K562 (cell line): ENCODE measurements at regions of chr17 and their contacts with region 1.

Region 1: GRCh38 chr17:46940621-46941404 is 17.9 kb downstream of the GOSR2 start:
- DNase-seq: peak; percentile 82 to 90 (median 83)
- ATAC-seq: peak; percentile 87
- H3K4me3 ChIP-seq: no peak overlapping the region
- H3K27ac ChIP-seq: no peak overlapping the region
- H3K4me1 ChIP-seq: peaks cover 19% of the 10 kb centered on the region in 2 experiments
- H3K27me3 ChIP-seq: no peaks in the 10 kb centered on the region
- CTCF ChIP-seq: peak; percentile 89 to 95 (median 95)
- EP300 ChIP-seq: no peak
- POLR2A ChIP-seq: peak; percentile 48; the same call in 1 of the 2 replicates
- RAD21 ChIP-seq: peak; percentile 82 to 95

Region 2: DNA sequence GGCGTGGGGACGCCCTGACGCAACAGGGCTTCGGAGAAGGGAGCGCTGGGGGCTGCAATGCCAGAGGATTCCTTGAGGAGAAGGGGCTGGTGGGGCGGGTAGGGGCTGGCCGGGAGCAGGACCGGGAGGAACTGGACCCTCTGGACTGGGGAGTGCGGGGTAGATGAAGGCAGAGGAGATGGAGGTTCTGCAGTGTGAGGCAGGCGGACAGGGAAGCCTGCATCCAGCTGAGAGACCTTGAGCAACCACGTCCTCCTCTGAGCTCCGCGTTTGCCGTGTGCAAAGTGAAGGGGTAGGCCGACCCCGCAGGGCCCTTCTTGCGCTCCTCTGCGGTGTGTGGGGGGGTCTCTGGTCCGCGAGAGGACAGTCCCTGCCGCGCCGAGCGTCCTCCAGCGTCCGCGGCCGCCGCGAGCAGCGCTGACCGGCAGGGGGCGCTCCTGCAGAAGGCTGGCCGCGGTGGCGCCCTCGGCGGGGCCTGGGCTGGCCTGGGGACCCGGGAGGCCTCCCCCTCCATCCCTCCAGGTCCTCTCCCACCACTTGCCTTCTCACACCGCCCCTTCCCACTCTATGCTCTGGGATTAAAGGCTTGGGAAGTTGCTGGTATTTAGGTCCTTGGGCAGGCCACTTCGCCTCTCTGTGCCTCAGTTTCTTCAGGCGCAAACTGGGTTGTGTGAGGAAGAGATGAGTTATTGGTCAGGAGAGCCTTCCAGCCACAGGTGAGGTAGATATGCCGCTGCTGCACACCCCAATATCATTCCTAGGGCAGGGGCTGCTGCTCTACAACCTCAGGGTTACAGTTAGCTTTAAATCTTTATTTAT is 99.0 kb before region 1 on chr17:
- CTCF ChIA-PET with region 1: interaction called, 4 read pairs
- POLR2A ChIA-PET with region 1: interaction called, 4 read pairs
- in situ Hi-C with region 1: no loop called
- intact Hi-C with region 1: loop called (anchors 1 kb)
- DNase-seq: peak; percentile 52 to 82 (median 81)
- ATAC-seq: peak; percentile 97
- H3K4me3 ChIP-seq: peak overlapping the region; percentile 9; the same call in 1 of the 2 replicates
- H3K27ac ChIP-seq: no peak overlapping the region
- H3K4me1 ChIP-seq: peaks cover 0 to 9% of the 10 kb centered on the region in 2 experiments; a peak in 4 of 5 replicates
- H3K27me3 ChIP-seq: peaks cover 0 to 7% of the 10 kb centered on the region in 2 experiments; a peak in 3 of 5 replicates
- CTCF ChIP-seq: peak; percentile 79 to 92 (median 90)
- EP300 ChIP-seq: no peak
- POLR2A ChIP-seq: no peak
- RAD21 ChIP-seq: peak; percentile 56 to 88

Region 3: DNA sequence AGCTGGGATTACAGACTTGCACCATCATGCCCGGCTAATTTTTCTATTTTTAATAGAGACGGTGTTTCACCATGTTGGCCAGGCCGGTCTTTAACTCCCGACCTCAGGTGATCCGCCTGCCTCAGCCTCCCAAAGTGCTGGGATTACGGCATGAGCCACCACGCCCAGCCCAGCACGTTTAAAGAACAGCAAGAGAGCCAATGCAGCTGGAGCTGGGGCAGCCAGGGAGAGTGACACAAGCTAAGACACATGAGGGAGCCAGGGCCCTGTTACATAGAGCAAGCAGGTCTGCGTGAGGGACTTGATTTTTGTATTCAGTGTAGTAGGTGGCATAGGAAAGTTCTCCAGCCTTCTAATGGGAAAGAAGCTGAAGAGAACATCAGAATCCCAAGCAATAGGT is 39.5 kb before region 1 on chr17:
- CTCF ChIA-PET with region 1: no interaction called
- POLR2A ChIA-PET with region 1: interaction called, 4 read pairs
- in situ Hi-C with region 1: no loop called
- intact Hi-C with region 1: loop called (anchors 5 kb)
- DNase-seq: no peak
- ATAC-seq: no peak; the same call in 2 of the 3 replicates
- H3K4me3 ChIP-seq: no peak overlapping the region
- H3K27ac ChIP-seq: no peak overlapping the region
- H3K4me1 ChIP-seq: peaks cover 9 to 10% of the 10 kb centered on the region in 2 experiments; a peak in 4 of 5 replicates
- H3K27me3 ChIP-seq: peaks cover 8 to 23% of the 10 kb centered on the region in 2 experiments; a peak in 3 of 5 replicates
- CTCF ChIP-seq: no peak
- EP300 ChIP-seq: no peak
- POLR2A ChIP-seq: no peak
- RAD21 ChIP-seq: no peak

Region 4: DNA sequence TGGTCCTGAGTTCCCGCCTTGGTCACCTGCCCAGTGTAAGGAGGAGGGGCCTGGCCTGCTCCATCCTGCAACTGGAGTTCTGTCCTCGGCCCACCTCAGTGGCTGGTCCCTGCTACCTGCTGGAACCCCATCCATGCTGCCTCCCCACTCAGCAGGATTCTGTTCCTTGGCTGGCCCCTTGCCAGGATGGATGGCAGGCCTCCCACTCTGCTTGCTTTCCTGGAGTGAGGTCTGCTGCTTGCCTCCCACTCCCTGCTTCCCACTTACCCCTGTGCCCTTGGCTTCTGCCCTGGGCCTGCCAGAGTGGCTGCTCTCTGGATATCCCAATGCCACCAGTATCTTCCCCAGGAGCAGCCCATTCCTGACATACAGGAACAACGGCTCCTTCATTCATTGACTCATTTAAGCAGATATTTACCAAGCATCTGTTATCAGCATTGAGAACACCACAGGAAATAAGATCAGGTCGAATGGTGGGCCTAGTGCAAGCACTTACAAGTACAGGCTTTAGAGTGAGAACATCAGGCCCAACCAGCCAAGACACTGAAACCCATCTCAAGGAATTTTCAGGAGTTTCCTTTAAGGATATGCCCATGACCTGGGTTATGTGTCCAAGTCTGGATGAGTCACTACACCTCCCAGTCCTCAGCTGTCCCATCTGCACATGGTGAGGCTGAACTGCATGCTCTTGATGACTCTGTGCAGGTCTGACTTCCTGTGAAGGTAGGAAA is 55.2 kb after region 1 on chr17:
- CTCF ChIA-PET with region 1: interaction called, 3 read pairs
- POLR2A ChIA-PET with region 1: interaction called, 4 read pairs
- in situ Hi-C with region 1: no loop called
- intact Hi-C with region 1: loop called (anchors 1 kb)
- DNase-seq: no peak
- ATAC-seq: no peak
- H3K4me3 ChIP-seq: no peak overlapping the region
- H3K27ac ChIP-seq: no peak overlapping the region
- H3K4me1 ChIP-seq: no peaks in the 10 kb centered on the region; a peak in 1 of 5 replicates
- H3K27me3 ChIP-seq: no peaks in the 10 kb centered on the region; a peak in 1 of 5 replicates
- CTCF ChIP-seq: no peak
- EP300 ChIP-seq: no peak
- POLR2A ChIP-seq: no peak
- RAD21 ChIP-seq: no peak

Region 5: GRCh38 chr17:47087093-47087492 is 146.3 kb after region 1 on chr17:
- CTCF ChIA-PET with region 1: no interaction called
- POLR2A ChIA-PET with region 1: no interaction called
- in situ Hi-C with region 1: no loop called
- intact Hi-C with region 1: no loop called
- DNase-seq: no peak
- ATAC-seq: no peak
- H3K4me3 ChIP-seq: no peak overlapping the region
- H3K27ac ChIP-seq: no peak overlapping the region
- H3K4me1 ChIP-seq: peaks cover 0 to 8% of the 10 kb centered on the region in 2 experiments; a peak in 4 of 5 replicates
- H3K27me3 ChIP-seq: no peaks in the 10 kb centered on the region
- CTCF ChIP-seq: no peak
- EP300 ChIP-seq: no peak
- POLR2A ChIP-seq: no peak
- RAD21 ChIP-seq: no peak

Region 6: GRCh38 chr17:47315451-47316266 is 374.8 kb after region 1 on chr17:
- CTCF ChIA-PET with region 1: interaction called, 4 read pairs
- POLR2A ChIA-PET with region 1: no interaction called
- in situ Hi-C with region 1: no loop called
- intact Hi-C with region 1: loop called (anchors 5 kb)
- DNase-seq: peak; percentile 55 to 80 (median 68)
- ATAC-seq: peak; percentile 94
- H3K4me3 ChIP-seq: no peak overlapping the region
- H3K27ac ChIP-seq: no peak overlapping the region
- H3K4me1 ChIP-seq: peaks cover 3 to 6% of the 10 kb centered on the region in 2 experiments; a peak in 2 of 5 replicates
- H3K27me3 ChIP-seq: no peaks in the 10 kb centered on the region
- CTCF ChIP-seq: peak; percentile 75 to 93 (median 81)
- EP300 ChIP-seq: no peak; the same call in 1 of the 2 replicates
- POLR2A ChIP-seq: no peak
- RAD21 ChIP-seq: peak; percentile 99 to 100